ENCODE measurements at regions of chr12 and their contacts with region 1.

Region 1: GRCh38 chr12:76621582-76622024 is 62.0 kb upstream of the OSBPL8 start:
- DNase-seq: peak; percentile 47 to 77 (median 64)
- ATAC-seq: peak; percentile 78 to 86
- H3K4me3 ChIP-seq: no peak overlapping the region
- H3K27ac ChIP-seq: no peak overlapping the region
- H3K4me1 ChIP-seq: no peaks in the 10 kb centered on the region
- H3K27me3 ChIP-seq: no peaks in the 10 kb centered on the region

Region 2: GRCh38 chr12:76790564-76791552 is 169.3 kb after region 1 on chr12:
- intact Hi-C with region 1: loop called (anchors 2 to 10 kb)
- DNase-seq: no peak
- ATAC-seq: no peak
- H3K4me3 ChIP-seq: no peak overlapping the region
- H3K27ac ChIP-seq: no peak overlapping the region
- H3K4me1 ChIP-seq: peaks cover 3% of the 10 kb centered on the region
- H3K27me3 ChIP-seq: no peaks in the 10 kb centered on the region

Region 3: DNA sequence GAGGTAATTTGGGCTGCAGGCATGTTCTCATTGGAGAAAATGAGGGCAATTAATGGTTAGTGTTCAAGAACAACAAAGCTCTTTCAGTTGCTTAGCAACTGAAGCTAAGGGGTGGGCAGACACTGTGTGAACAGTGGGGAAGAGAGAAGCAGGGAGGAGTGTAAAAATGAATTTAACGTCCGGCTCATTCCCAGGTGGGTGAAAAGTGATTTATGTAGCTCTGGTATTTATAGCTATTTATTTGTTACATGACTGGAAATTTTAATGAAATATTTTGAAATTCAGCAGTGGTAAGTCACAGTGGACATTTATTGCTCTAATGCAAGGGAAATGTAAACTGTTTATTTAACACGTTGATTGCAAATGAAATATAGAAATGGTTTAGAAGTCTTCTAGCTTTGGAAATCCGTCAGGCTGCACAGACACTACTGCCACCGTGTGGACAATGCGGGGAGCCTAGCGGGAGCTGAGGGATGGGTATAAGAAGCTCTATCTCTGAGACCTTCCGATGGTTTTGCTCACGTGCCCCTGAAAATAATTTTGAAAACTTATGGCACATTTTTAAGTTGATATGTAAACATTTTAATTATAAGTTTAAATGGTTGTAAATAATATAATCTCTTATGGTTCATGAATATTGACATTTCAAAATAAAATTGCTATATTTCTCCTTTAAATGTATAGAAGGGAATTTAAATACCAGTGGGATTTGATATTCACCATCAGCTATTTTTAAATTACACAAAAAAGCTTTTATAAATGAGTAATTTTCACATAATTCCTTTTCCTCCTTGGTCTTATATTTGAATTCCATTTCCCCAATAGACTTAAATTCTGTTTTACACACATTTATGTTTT is 389.3 kb after region 1 on chr12:
- intact Hi-C with region 1: loop called in 3 of 4 experiments (anchors 5 kb)
- DNase-seq: peak; percentile 62 to 82 (median 81)
- ATAC-seq: peak; percentile 65 to 78
- H3K4me3 ChIP-seq: peak overlapping the region; percentile 20
- H3K27ac ChIP-seq: no peak overlapping the region
- H3K4me1 ChIP-seq: no peaks in the 10 kb centered on the region
- H3K27me3 ChIP-seq: no peaks in the 10 kb centered on the region

Region 4: DNA sequence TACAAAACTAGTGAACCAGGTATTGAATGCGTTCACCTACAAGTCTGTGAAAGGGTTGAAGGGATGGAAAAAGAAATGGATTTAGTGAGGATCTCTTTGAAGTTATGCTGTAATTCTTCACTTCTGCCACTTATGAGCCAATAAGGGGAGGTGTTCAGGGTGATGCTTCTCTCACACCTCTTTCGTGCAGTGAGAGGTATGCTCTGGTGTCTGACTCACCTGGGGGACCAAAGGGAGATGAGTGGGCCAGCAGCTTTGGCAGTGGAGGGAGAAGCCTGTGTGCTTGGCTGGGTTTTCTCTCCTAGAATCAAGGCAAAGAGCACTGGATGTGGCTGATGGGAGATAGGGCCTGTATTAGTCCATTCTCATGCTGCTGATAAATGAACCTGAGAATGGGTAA is 398.3 kb after region 1 on chr12:
- intact Hi-C with region 1: loop called in 1 of 4 experiments (anchors 5 kb)
- DNase-seq: no peak
- ATAC-seq: no peak
- H3K4me3 ChIP-seq: no peak overlapping the region
- H3K27ac ChIP-seq: no peak overlapping the region
- H3K4me1 ChIP-seq: no peaks in the 10 kb centered on the region
- H3K27me3 ChIP-seq: no peaks in the 10 kb centered on the region

Measured in right cardiac atrium (tissue), 5 donors.